Heart right ventricle (tissue), 16 donors: ENCODE measurements at regions of chr5 and their contacts with region 1.

Region 1: GRCh38 chr5:10452768-10453331 is 11.2 kb downstream of the ROPN1L start:
- DNase-seq: peak in 1 of 2 donors; percentile 25
- ATAC-seq: peak; percentile 54 to 87 (median 80)
- H3K4me3 ChIP-seq: no peak overlapping the region
- H3K27ac ChIP-seq: no peak overlapping the region
- H3K4me1 ChIP-seq: peaks cover 8 to 39% (median 11%) of the 10 kb centered on the region in 9 donors
- H3K27me3 ChIP-seq: no peaks in the 10 kb centered on the region
- CTCF ChIP-seq: peak; percentile 47 to 89 (median 77)

Region 2: GRCh38 chr5:10563945-10564837 is 111.3 kb after region 1 on chr5 and contains the start of gene ANKRD33B:
- intact Hi-C with region 1: loop called in 1 of 10 experiments (anchors 10 kb)
- DNase-seq: peak; percentile 72 to 73
- ATAC-seq: peak; percentile 67 to 78 (median 74)
- H3K4me3 ChIP-seq: peak within 1 kb of the TSS; percentile 50 to 87 (median 78)
- H3K27ac ChIP-seq: peak within 1 kb of the TSS; percentile 33 to 89 (median 84)
- H3K4me1 ChIP-seq: peaks cover 6 to 52% (median 41%) of the 10 kb centered on the region in 9 donors
- H3K27me3 ChIP-seq: peaks cover 0 to 35% (median 0%) of the 10 kb centered on the region in 7 donors
- CTCF ChIP-seq: no peak
- total RNA-seq, gene ANKRD33B: 1.9 to 33.0 (median 19.8) TPM

Region 3: DNA sequence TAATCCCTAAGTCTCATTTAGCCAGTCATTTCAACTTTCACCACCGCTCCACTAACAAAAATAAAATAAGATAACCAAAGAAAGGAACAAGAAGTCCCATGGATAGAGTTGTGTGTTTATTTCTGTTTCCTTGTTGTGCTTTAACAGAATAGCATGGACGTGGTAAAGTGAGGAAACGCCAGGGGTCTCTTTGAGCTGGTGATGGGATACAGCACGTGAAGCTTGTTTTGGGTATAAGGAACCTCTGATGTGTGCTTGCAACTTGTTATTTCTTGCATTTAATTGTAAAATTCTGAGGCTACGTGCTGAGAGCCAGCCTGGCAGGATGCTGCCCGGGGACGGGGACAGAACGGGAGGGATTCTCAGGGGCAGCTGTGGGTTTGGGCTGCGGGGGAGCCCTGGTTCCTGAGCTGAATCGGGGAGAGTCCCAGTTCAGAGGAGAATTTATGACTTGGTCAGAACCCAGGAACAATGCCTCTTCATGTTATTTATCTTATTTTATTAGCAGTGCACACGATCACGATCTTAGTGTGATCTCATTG is 174.4 kb after region 1 on chr5:
- intact Hi-C with region 1: loop called (anchors 1 to 5 kb)
- DNase-seq: no peak
- ATAC-seq: peak in 5 of 8 donors; percentile 5 to 29 (median 17)
- H3K4me3 ChIP-seq: peak overlapping the region in 9 of 10 donors; percentile 6 to 37 (median 32)
- H3K27ac ChIP-seq: peak overlapping the region in 7 of 10 donors; percentile 3 to 69 (median 36)
- H3K4me1 ChIP-seq: peaks cover 9 to 48% (median 33%) of the 10 kb centered on the region in 9 donors
- H3K27me3 ChIP-seq: peaks cover 0 to 6% (median 0%) of the 10 kb centered on the region in 7 donors
- CTCF ChIP-seq: no peak

Region 4: DNA sequence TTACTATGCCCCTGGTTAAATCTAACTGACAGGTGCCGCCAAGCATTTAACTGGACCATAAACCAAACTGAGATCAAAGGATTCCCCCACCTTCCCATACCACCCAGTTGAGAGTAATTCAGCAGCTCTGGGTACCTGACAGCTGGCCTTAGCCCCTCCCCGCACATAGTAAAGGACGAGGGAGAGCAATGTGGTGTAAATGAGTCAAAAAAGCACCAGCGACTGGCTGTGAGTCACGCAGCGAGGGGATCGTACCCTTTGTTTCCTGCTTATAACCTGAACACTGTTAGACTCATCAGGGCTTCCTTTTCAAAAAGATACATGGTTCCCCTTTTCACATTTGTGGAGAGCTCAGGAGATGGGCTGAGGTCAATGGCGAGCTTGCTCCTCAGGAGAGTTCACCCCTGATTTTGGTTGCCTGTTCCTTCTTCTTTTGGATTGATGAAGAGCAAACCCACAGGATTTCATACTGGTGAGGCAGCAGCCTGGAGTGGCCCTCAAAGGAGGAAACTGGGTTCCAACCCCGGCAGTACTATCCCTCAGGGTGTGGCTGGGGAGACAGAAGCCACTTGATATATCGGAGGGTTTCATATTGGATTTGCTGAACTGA is 182.5 kb after region 1 on chr5:
- intact Hi-C with region 1: loop called in 1 of 10 experiments (anchors 2 kb)
- DNase-seq: no peak
- ATAC-seq: no peak
- H3K4me3 ChIP-seq: no peak overlapping the region
- H3K27ac ChIP-seq: peak overlapping the region in 1 of 10 donors; percentile 31
- H3K4me1 ChIP-seq: peaks cover 0 to 52% (median 0%) of the 10 kb centered on the region in 9 donors
- H3K27me3 ChIP-seq: peaks cover 0 to 2% (median 0%) of the 10 kb centered on the region in 7 donors
- CTCF ChIP-seq: no peak

Region 5: GRCh38 chr5:10863763-10864383 is 411.0 kb after region 1 on chr5:
- intact Hi-C with region 1: loop called in 1 of 10 experiments (anchors 10 kb)
- DNase-seq: peak; percentile 26 to 38
- ATAC-seq: peak in 4 of 8 donors; percentile 52 to 70 (median 60)
- H3K4me3 ChIP-seq: no peak overlapping the region
- H3K27ac ChIP-seq: no peak overlapping the region
- H3K4me1 ChIP-seq: no peaks in the 10 kb centered on the region
- H3K27me3 ChIP-seq: peaks cover 0 to 4% (median 0%) of the 10 kb centered on the region in 7 donors
- CTCF ChIP-seq: peak; percentile 45 to 90 (median 68)